Lower leg skin (tissue), 4 donors: ENCODE measurements at regions of chr20 and their contacts with region 1.

Region 1: GRCh38 chr20:21453680-21454079 is 56.4 kb upstream of the NKX2-4 start:
- DNase-seq: no peak
- H3K4me3 ChIP-seq: no peak overlapping the region
- CTCF ChIP-seq: no peak
- POLR2A ChIP-seq: no peak

Region 2: DNA sequence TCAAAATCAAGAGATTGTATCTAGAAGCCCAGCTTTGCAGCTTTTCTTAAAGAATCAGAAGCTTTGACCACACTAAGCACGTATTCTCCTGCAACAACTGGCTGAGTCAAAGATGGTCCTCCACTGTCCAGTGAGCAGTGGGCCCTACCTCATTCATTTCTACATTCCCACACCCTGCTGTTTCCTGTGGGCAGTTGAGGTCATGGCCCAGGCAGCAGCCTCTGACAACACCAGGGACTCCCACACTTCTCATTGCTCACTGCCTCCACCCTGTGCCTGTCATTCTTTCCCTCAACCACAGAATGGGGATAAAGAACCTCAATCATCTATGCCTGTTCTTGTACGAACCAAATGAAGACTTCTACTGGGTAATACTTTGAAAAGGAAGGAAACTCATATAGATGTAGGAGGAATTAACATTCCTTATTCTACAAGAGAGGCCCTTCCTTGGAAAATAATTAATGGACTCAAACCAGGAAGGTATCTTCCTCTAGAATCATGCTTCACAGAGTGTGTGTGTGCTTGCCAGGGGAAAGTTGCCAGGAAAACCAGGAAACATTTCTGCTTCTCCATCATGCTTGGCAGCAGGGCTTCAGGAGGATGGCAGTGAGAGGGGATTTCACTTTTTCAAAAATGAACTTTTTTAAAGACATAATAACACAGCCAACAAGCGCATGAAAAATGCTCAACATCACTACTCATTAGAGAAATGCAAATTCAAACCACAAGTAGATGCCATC is 1887.3 kb before region 1 on chr20:
- intact Hi-C with region 1: no loop called
- DNase-seq: no peak
- H3K4me3 ChIP-seq: no peak overlapping the region
- CTCF ChIP-seq: no peak
- POLR2A ChIP-seq: no peak

Region 3: DNA sequence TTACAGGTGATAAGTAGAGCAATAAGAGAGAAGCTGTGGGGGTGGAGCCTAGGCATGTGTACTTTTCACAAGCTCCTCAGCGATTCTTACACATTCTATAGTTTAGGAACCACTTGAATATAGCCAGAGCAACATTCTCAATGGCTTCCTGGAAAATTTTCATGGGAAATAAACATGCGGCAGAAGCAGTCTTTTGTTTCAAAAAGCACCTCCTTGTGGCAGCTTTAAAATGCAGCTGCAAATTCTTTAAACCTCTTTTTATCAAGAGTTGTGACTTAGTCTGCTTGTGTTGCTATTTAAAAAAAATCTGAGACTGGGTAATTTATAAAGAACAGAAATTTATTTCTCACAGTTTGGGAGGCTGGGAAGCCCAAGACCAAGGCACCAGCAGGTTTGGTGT is 36.4 kb after region 1 on chr20:
- intact Hi-C with region 1: loop called (anchors 1 kb)
- DNase-seq: no peak
- H3K4me3 ChIP-seq: no peak overlapping the region
- CTCF ChIP-seq: no peak
- POLR2A ChIP-seq: no peak

Region 4: GRCh38 chr20:21862259-21862946 is 408.7 kb after region 1 on chr20:
- intact Hi-C with region 1: no loop called
- DNase-seq: no peak
- H3K4me3 ChIP-seq: no peak overlapping the region
- CTCF ChIP-seq: no peak
- POLR2A ChIP-seq: no peak